Mammary epithelial cell (primary cell): ENCODE measurements at regions of chr6 and their contacts with region 1.

Region 1: DNA sequence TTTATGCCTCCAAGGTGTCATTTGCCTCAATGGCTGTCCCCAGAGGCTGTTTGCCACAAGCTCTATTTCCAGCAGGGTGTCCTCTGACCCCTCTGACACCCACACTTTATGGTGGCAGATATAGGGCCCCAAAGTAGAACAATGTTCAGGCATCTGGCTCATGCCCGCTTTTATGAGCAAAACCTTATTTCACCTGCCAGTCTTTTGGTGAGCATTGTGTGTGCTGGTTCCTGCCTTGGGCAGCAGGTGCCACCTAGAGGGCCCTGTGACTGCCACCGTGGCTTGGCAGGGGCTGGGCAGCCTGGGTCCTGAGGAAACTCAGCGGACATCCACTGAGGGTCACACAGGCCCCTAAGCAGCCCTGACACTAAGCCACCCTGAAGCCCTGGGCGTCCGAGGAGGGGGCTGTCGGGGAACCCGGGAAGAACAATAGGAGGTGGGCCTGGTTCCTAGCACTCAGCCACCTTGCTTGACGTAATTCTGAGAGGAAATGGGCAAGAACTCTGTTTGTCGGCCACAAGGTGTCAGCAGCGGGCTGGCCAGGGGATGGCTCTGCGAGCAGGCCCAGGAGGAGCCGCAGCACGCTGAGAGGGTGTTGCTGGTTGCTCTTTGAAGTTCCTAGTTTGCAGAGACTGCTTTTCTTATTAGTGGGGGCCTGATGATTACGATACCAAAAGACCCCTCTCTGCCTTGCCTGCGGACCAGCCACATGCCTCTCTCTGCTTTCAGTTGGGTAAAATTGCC is 148.9 kb downstream of the SCML4 start:
- DNase-seq: peak; percentile 71
- H3K4me3 ChIP-seq: peak overlapping the region in 2 of 3 experiments; percentile 9 to 42
- H3K27ac ChIP-seq: no peak overlapping the region
- H3K4me1 ChIP-seq: no peaks in the 10 kb centered on the region
- H3K27me3 ChIP-seq: no peaks in the 10 kb centered on the region
- CTCF ChIP-seq: peak; percentile 80 to 93

Region 2: DNA sequence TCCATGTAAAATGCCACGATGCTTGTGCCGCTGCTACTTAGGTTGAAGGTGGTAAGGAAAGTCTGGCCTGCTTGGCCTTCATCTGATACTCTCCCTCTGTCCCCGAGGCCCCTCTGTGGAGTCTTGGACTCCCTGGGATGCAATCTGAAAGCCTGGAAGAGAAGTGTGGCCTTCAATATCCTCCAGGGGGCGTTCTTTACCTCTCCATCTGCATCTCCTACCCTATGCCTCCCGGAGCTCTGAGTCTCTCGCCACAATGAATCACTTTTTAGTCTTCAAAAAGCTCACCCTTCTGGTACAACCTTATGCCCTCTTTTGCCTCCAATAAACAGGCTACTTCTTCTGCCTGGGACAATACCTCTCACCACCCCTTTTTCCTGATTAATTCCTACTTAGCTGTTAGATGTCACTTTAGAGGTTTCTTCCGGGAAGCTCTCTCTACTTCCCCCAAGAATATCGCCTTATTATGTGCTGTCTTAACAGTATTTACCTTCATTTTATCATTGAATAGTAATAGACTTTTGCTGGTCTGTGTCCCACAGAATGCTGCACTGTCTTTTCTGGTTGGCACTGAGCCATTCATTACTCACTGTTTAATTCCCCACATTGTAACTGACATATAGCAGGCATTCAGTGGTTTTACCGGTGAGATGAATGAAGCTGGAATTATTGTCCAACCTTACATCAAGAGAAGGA is 1335.7 kb before region 1 on chr6:
- CTCF ChIA-PET with region 1: no interaction called
- dilution Hi-C with region 1: no loop called
- in situ Hi-C with region 1: no loop called
- intact Hi-C with region 1: loop called (anchors 5 kb)
- DNase-seq: peak; percentile 86
- H3K4me3 ChIP-seq: no peak overlapping the region
- H3K27ac ChIP-seq: peak overlapping the region; percentile 13
- H3K4me1 ChIP-seq: peaks cover 13% of the 10 kb centered on the region
- H3K27me3 ChIP-seq: no peaks in the 10 kb centered on the region
- CTCF ChIP-seq: peak; percentile 82 to 91

Region 3: DNA sequence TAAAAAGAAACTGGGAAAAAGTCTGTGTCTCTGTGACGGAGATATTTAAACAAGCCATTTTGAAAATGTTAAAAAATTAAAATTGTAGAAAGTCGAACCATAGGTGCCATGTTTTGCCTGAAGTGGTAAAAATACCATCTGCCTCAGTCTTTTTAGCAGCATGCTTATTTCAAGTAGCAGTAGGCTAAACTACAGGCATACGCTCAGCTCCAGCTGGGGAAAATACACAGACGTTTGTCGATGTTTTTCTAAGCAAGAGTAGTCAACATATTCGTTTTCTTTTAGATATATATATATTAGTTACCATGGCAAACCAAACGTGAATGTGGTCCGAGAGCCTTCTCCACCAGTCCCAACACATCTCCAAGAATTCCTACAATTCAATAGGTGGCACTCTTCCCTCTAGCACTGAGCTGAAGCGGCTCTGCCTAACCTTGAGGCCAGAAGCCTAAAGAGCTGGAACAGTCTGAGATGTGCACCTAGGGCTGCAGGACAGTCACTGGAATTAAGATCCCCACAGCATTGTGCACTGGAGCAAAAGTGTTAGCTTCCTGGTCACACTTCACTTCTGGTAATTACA is 489.7 kb before region 1 on chr6:
- CTCF ChIA-PET with region 1: no interaction called
- dilution Hi-C with region 1: no loop called
- in situ Hi-C with region 1: no loop called
- intact Hi-C with region 1: loop called (anchors 1 kb)
- DNase-seq: peak; percentile 34
- H3K4me3 ChIP-seq: no peak overlapping the region
- H3K27ac ChIP-seq: no peak overlapping the region
- H3K4me1 ChIP-seq: no peaks in the 10 kb centered on the region
- H3K27me3 ChIP-seq: no peaks in the 10 kb centered on the region
- CTCF ChIP-seq: peak; percentile 15 to 54

Region 4: GRCh38 chr6:107459283-107460082 is 215.7 kb before region 1 on chr6 and contains the start of gene PDSS2:
- CTCF ChIA-PET with region 1: no interaction called
- dilution Hi-C with region 1: no loop called
- in situ Hi-C with region 1: no loop called
- intact Hi-C with region 1: loop called (anchors 1 kb)
- DNase-seq: peak; percentile 94
- H3K4me3 ChIP-seq: peak within 1 kb of the TSS; percentile 68 to 78 (median 74)
- H3K27ac ChIP-seq: peak within 1 kb of the TSS; percentile 73
- H3K4me1 ChIP-seq: peaks cover 10% of the 10 kb centered on the region
- H3K27me3 ChIP-seq: no peaks in the 10 kb centered on the region
- CTCF ChIP-seq: peak; percentile 28 to 61
- total RNA-seq, gene PDSS2: 7.5 to 10.6 TPM

Region 5: GRCh38 chr6:107600936-107601335 is 74.2 kb before region 1 on chr6:
- CTCF ChIA-PET with region 1: no interaction called
- dilution Hi-C with region 1: no loop called
- in situ Hi-C with region 1: no loop called
- intact Hi-C with region 1: no loop called
- DNase-seq: peak; percentile 12
- H3K4me3 ChIP-seq: no peak overlapping the region
- H3K27ac ChIP-seq: no peak overlapping the region
- H3K4me1 ChIP-seq: peaks cover 5% of the 10 kb centered on the region
- H3K27me3 ChIP-seq: peaks cover 4% of the 10 kb centered on the region
- CTCF ChIP-seq: no peak

Region 6: DNA sequence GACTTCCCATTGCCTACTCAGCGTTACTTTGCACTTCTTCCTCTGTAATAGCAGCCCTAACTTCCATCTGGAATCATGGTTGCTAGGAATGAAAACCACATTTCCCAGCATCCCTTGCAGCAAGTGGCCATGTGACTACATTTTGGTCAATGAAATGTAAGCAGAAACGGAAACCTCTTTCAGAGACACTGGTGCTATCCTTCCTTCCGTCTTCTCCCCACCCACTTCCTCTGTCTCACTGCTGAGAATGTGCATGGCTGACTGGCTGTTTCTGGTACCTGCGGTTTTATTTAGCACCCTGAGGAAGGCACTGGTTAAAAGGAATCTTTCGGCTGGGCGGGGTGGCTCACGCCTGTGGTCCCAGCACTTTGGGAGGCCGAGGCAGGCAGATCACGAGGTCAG is 41.5 kb after region 1 on chr6:
- CTCF ChIA-PET with region 1: interaction called, 17 read pairs
- dilution Hi-C with region 1: no loop called
- in situ Hi-C with region 1: no loop called
- intact Hi-C with region 1: no loop called
- DNase-seq: no peak
- H3K4me3 ChIP-seq: no peak overlapping the region
- H3K27ac ChIP-seq: no peak overlapping the region
- H3K4me1 ChIP-seq: peaks cover 15% of the 10 kb centered on the region
- H3K27me3 ChIP-seq: no peaks in the 10 kb centered on the region
- CTCF ChIP-seq: no peak

Region 7: GRCh38 chr6:107753778-107754177 is 78.6 kb after region 1 on chr6:
- CTCF ChIA-PET with region 1: no interaction called
- dilution Hi-C with region 1: no loop called
- in situ Hi-C with region 1: no loop called
- intact Hi-C with region 1: no loop called
- DNase-seq: no peak
- H3K4me3 ChIP-seq: no peak overlapping the region
- H3K27ac ChIP-seq: no peak overlapping the region
- H3K4me1 ChIP-seq: no peaks in the 10 kb centered on the region
- H3K27me3 ChIP-seq: no peaks in the 10 kb centered on the region
- CTCF ChIP-seq: no peak

Region 8: DNA sequence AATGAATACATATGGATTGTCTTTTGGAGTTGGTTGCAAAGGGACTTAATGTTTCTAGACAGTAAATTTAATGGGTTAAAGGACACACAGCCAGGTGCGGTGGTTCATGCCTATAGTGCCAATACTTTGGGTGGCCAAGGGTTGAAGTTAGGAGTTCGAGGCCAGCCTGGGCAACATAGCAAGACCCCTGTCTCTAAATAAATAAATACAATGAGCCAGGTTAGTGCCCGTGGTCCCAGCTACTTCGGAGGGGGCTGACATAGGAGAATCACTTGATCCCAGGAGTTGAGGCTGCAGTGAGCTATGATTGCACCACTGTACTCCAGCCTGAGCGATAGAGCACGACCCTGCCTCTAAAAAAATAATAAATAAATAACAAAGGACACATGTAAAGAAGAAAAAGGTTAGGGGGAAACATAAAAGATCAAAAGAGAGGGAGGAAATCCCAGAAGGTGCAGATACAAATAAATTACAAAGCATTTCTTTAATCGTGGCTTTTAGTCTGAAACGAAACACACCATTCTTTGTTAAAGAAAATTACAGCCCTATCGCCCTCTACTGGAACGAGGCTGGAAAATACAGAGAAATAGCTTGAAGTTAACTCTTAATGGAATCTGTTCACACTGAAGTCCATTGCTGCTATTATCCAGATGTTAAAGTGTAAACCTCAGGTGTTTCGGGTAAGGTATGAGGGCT is 191.6 kb after region 1 on chr6:
- CTCF ChIA-PET with region 1: no interaction called
- dilution Hi-C with region 1: no loop called
- in situ Hi-C with region 1: no loop called
- intact Hi-C with region 1: loop called (anchors 1 kb)
- DNase-seq: peak; percentile 34
- H3K4me3 ChIP-seq: no peak overlapping the region
- H3K27ac ChIP-seq: no peak overlapping the region
- H3K4me1 ChIP-seq: no peaks in the 10 kb centered on the region
- H3K27me3 ChIP-seq: no peaks in the 10 kb centered on the region
- CTCF ChIP-seq: peak; percentile 59 to 62